WTC11 (cell line): ENCODE measurements at regions of chr11 and their contacts with region 1.

Region 1: GRCh38 chr11:32792948-32793475 is 1.4 kb downstream of the CCDC73 start:
- DNase-seq: peak; percentile 61
- ATAC-seq: peak; percentile 57
- H3K4me3 Mint-ChIP-seq: peak overlapping the region; percentile 17; the same call in 1 of the 2 replicates
- H3K27ac Mint-ChIP-seq: no peak overlapping the region
- H3K4me1 Mint-ChIP-seq: peaks cover 4% of the 10 kb centered on the region
- H3K27me3 Mint-ChIP-seq: peaks cover 3% of the 10 kb centered on the region; the same call in 1 of the 2 replicates
- CTCF ChIP-seq: peak; percentile 70; the same call in 1 of the 2 replicates

Region 2: DNA sequence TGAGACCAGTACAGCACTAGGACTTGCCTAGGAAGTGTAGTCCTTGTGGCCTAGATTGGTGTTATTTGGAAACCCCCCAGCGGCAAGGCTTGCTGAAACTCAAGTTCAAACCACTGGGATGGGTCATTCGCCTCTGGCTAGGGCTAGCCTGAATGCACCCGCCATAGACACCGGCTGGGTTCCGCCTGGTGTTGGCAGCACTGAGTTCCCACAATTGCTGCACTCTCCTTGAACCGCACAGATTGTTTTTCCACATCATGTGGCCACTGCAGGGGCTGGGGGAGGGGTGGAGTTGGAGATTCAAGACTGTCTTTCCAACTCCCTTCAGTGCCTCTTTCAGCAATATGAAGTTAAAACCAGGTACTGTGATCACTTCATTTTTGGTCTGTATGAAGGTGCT is 41.6 kb before region 1 on chr11:
- CTCF ChIA-PET with region 1: interaction called, 18 read pairs
- POLR2A ChIA-PET with region 1: no interaction called
- DNase-seq: peak; percentile 43
- ATAC-seq: peak; percentile 81
- H3K4me3 Mint-ChIP-seq: no peak overlapping the region
- H3K27ac Mint-ChIP-seq: no peak overlapping the region
- H3K4me1 Mint-ChIP-seq: no peaks in the 10 kb centered on the region
- H3K27me3 Mint-ChIP-seq: peaks cover 8% of the 10 kb centered on the region
- CTCF ChIP-seq: no peak

Region 3: DNA sequence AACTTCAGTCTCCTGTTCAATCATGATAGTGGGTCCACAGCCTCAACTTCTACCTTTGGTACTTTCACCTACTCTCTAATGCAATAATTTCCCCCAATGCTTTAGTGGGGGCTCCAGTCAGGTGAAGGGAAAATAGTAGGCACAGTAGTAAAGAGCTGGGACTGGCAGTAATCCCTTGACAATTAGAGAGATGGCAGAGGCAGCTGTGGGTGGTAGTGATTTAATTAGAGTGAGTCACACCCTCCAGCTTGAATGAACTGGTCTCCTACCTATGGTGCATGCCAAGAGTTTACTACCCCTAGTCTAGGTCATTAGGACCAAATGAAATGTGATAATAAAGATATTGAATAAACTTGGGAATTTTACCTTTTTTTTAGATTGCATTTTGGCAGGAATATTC is 45.5 kb after region 1 on chr11:
- CTCF ChIA-PET with region 1: no interaction called
- POLR2A ChIA-PET with region 1: no interaction called
- DNase-seq: no peak
- ATAC-seq: 0 out of 2 replicates have a peak, but pooled peaks have one; percentile 18
- H3K4me3 Mint-ChIP-seq: no peak overlapping the region
- H3K27ac Mint-ChIP-seq: no peak overlapping the region
- H3K4me1 Mint-ChIP-seq: peaks cover 12% of the 10 kb centered on the region
- H3K27me3 Mint-ChIP-seq: no peaks in the 10 kb centered on the region
- CTCF ChIP-seq: no peak